CD8-positive, alpha-beta memory T cell (primary cell): ENCODE measurements at regions of chr2 and their contacts with region 1.

Region 1: DNA sequence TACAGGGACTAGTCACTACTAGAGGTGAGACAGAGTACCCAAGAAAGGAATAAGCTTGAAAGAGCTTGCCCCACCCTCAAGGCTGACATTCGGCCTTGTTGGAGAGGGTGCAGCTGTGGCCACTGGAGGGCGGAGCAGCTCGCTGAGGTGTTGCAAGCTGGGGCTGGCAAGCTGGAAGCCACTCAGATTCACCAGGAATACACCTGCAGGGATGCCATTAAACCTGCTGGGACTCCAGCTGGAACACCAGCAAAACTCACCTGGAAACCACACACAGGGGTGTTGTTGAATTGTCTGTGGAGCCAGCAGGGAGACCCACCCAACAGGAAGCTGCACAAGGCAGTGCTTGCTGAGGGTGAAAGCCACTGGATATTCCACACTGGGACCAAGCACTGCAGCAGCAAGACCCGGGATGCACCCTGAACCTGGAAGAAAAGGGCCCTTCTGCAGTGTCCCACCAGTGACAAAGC is 26.1 kb downstream of the KCTD18 start:
- DNase-seq: no peak
- H3K4me3 ChIP-seq: no peak overlapping the region
- H3K4me3 Mint-ChIP-seq: no peak overlapping the region
- H3K27ac ChIP-seq: no peak overlapping the region
- H3K27ac Mint-ChIP-seq: no peak overlapping the region
- H3K4me1 ChIP-seq: no peaks in the 10 kb centered on the region
- H3K4me1 Mint-ChIP-seq: peaks cover 3 to 6% (median 4%) of the 10 kb centered on the region in 3 donors
- H3K27me3 ChIP-seq: no peaks in the 10 kb centered on the region
- H3K27me3 Mint-ChIP-seq: no peaks in the 10 kb centered on the region

Region 2: DNA sequence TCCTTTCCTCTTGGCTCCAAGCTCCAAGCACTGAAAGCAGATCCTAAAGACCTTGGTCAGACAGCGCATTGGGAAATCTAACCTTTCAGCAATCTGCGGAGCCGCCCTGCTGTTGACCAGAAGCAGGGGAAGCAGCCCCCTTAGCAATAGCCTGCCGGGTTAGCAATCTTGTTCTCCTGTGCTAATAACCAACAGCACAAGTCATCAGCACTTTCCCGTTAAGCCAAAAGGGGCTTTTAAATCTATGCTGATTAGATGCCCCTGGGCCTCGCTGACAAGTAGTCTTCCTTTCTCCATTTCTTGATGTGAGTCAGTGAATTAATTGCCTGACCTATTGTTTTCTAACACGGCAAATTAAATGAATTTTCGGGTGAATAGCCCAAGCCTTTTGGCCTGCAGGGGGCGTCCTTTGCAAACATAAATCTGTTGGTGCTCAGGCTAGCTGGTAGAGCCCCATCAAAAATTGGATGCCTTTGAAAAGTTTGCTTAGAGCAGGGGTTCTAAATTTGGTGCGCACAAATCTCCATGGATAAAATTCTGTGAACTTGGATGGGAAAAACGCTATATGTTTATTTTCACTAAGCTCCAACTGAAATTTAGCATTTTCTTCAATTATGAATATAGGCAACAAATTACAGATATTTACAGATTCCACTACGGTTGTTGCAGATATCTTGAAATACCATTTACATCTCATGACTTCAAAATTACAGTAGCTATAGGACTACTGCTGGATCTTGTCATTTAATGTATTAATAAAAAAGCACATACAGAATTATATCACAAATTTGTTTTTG is 503.7 kb before region 1 on chr2:
- CTCF ChIA-PET with region 1: interaction called, 34 read pairs
- POLR2A ChIA-PET with region 1: no interaction called
- DNase-seq: peak; percentile 53 to 81 (median 73)
- H3K4me3 ChIP-seq: no peak overlapping the region
- H3K4me3 Mint-ChIP-seq: no peak overlapping the region
- H3K27ac ChIP-seq: no peak overlapping the region
- H3K27ac Mint-ChIP-seq: peak overlapping the region in 1 of 8 donors; percentile 83
- H3K4me1 ChIP-seq: no peaks in the 10 kb centered on the region
- H3K4me1 Mint-ChIP-seq: peaks cover 2 to 6% (median 5%) of the 10 kb centered on the region in 3 donors
- H3K27me3 ChIP-seq: no peaks in the 10 kb centered on the region
- H3K27me3 Mint-ChIP-seq: no peaks in the 10 kb centered on the region

Region 3: GRCh38 chr2:199985625-199986207 is 498.0 kb before region 1 on chr2:
- CTCF ChIA-PET with region 1: interaction called, 34 read pairs
- POLR2A ChIA-PET with region 1: no interaction called
- DNase-seq: peak; percentile 3 to 61 (median 25)
- H3K4me3 ChIP-seq: no peak overlapping the region
- H3K4me3 Mint-ChIP-seq: no peak overlapping the region
- H3K27ac ChIP-seq: no peak overlapping the region
- H3K27ac Mint-ChIP-seq: no peak overlapping the region
- H3K4me1 ChIP-seq: no peaks in the 10 kb centered on the region
- H3K4me1 Mint-ChIP-seq: peaks cover 0 to 8% (median 5%) of the 10 kb centered on the region in 3 donors
- H3K27me3 ChIP-seq: no peaks in the 10 kb centered on the region
- H3K27me3 Mint-ChIP-seq: peaks cover 0 to 4% of the 10 kb centered on the region in 2 donors

Region 4: GRCh38 chr2:200239216-200239615 is 244.5 kb before region 1 on chr2:
- CTCF ChIA-PET with region 1: no interaction called
- POLR2A ChIA-PET with region 1: no interaction called
- DNase-seq: peak in 1 of 5 donors; percentile 2
- H3K4me3 ChIP-seq: no peak overlapping the region
- H3K4me3 Mint-ChIP-seq: no peak overlapping the region
- H3K27ac ChIP-seq: no peak overlapping the region
- H3K27ac Mint-ChIP-seq: peak overlapping the region in 1 of 8 donors; percentile 64
- H3K4me1 ChIP-seq: no peaks in the 10 kb centered on the region
- H3K4me1 Mint-ChIP-seq: peaks cover 3 to 4% (median 4%) of the 10 kb centered on the region in 3 donors
- H3K27me3 ChIP-seq: no peaks in the 10 kb centered on the region
- H3K27me3 Mint-ChIP-seq: peaks cover 3 to 35% of the 10 kb centered on the region in 2 donors

Region 5: GRCh38 chr2:200471324-200471848 is 12.4 kb before region 1 on chr2:
- CTCF ChIA-PET with region 1: interaction called, 42 read pairs
- POLR2A ChIA-PET with region 1: no interaction called
- DNase-seq: peak; percentile 19 to 56 (median 32)
- H3K4me3 ChIP-seq: no peak overlapping the region
- H3K4me3 Mint-ChIP-seq: peak overlapping the region in 3 of 7 donors; percentile 13 to 72 (median 70)
- H3K27ac ChIP-seq: no peak overlapping the region
- H3K27ac Mint-ChIP-seq: peak overlapping the region in 6 of 8 donors; percentile 0 to 94 (median 82)
- H3K4me1 ChIP-seq: peaks cover 31% of the 10 kb centered on the region
- H3K4me1 Mint-ChIP-seq: peaks cover 33 to 37% (median 36%) of the 10 kb centered on the region in 3 donors
- H3K27me3 ChIP-seq: no peaks in the 10 kb centered on the region
- H3K27me3 Mint-ChIP-seq: no peaks in the 10 kb centered on the region

Region 6: GRCh38 chr2:200494048-200494447 is 10.3 kb after region 1 on chr2:
- CTCF ChIA-PET with region 1: interaction called, 16 read pairs
- POLR2A ChIA-PET with region 1: no interaction called
- DNase-seq: no peak
- H3K4me3 ChIP-seq: no peak overlapping the region
- H3K4me3 Mint-ChIP-seq: no peak overlapping the region
- H3K27ac ChIP-seq: no peak overlapping the region
- H3K27ac Mint-ChIP-seq: peak overlapping the region in 3 of 8 donors; percentile 28 to 75 (median 35)
- H3K4me1 ChIP-seq: no peaks in the 10 kb centered on the region
- H3K4me1 Mint-ChIP-seq: peaks cover 0 to under 1% (median 0%) of the 10 kb centered on the region in 3 donors
- H3K27me3 ChIP-seq: no peaks in the 10 kb centered on the region
- H3K27me3 Mint-ChIP-seq: no peaks in the 10 kb centered on the region